Common myeloid progenitor, CD34-positive (primary cell): ENCODE measurements at regions of chr7 and their contacts with region 1.

Region 1: GRCh38 chr7:141654551-141654950 is 47.4 kb downstream of the DENND11 start:
- DNase-seq: peak; percentile 86 to 90 (median 88)
- H3K4me3 ChIP-seq: no peak overlapping the region
- H3K27ac ChIP-seq: peak overlapping the region in 1 of 2 experiments; percentile 20
- H3K4me1 ChIP-seq: peaks cover 7 to 18% (median 10%) of the 10 kb centered on the region in 4 experiments
- H3K27me3 ChIP-seq: no peaks in the 10 kb centered on the region

Region 2: GRCh38 chr7:141674702-141675101 is 20.2 kb after region 1 on chr7:
- CTCF ChIA-PET with region 1: interaction called, 233 read pairs
- POLR2A ChIA-PET with region 1: interaction called, 4 read pairs
- DNase-seq: peak in 1 of 3 donors; percentile 23
- H3K4me3 ChIP-seq: no peak overlapping the region
- H3K27ac ChIP-seq: no peak overlapping the region
- H3K4me1 ChIP-seq: peaks cover 14 to 27% (median 20%) of the 10 kb centered on the region in 4 experiments
- H3K27me3 ChIP-seq: no peaks in the 10 kb centered on the region

Region 3: GRCh38 chr7:141701489-141702046 is 47.0 kb after region 1 on chr7:
- CTCF ChIA-PET with region 1: interaction called, 31 read pairs
- POLR2A ChIA-PET with region 1: interaction called, 3 read pairs
- DNase-seq: peak; percentile 65 to 91 (median 89)
- H3K4me3 ChIP-seq: peak overlapping the region; percentile 69 to 91 (median 77)
- H3K27ac ChIP-seq: peak overlapping the region in 1 of 2 experiments; percentile 75
- H3K4me1 ChIP-seq: peaks cover 0 to 53% (median 27%) of the 10 kb centered on the region in 4 experiments
- H3K27me3 ChIP-seq: peaks cover 0 to 3% (median 0%) of the 10 kb centered on the region in 5 experiments

Region 4: GRCh38 chr7:141710301-141710700 is 55.8 kb after region 1 on chr7:
- CTCF ChIA-PET with region 1: interaction called, 48 read pairs
- POLR2A ChIA-PET with region 1: no interaction called
- DNase-seq: peak in 2 of 3 donors; percentile 34 to 36
- H3K4me3 ChIP-seq: no peak overlapping the region
- H3K27ac ChIP-seq: no peak overlapping the region
- H3K4me1 ChIP-seq: no peaks in the 10 kb centered on the region
- H3K27me3 ChIP-seq: no peaks in the 10 kb centered on the region

Region 5: GRCh38 chr7:141715794-141716689 is 61.5 kb after region 1 on chr7:
- CTCF ChIA-PET with region 1: interaction called, 48 read pairs
- POLR2A ChIA-PET with region 1: no interaction called
- DNase-seq: no peak
- H3K4me3 ChIP-seq: no peak overlapping the region
- H3K27ac ChIP-seq: no peak overlapping the region
- H3K4me1 ChIP-seq: no peaks in the 10 kb centered on the region
- H3K27me3 ChIP-seq: no peaks in the 10 kb centered on the region

Region 6: GRCh38 chr7:141731476-141732149 is 77.1 kb after region 1 on chr7:
- CTCF ChIA-PET with region 1: interaction called, 47 read pairs
- POLR2A ChIA-PET with region 1: no interaction called
- DNase-seq: no peak
- H3K4me3 ChIP-seq: no peak overlapping the region
- H3K27ac ChIP-seq: no peak overlapping the region
- H3K4me1 ChIP-seq: no peaks in the 10 kb centered on the region
- H3K27me3 ChIP-seq: no peaks in the 10 kb centered on the region

Region 7: DNA sequence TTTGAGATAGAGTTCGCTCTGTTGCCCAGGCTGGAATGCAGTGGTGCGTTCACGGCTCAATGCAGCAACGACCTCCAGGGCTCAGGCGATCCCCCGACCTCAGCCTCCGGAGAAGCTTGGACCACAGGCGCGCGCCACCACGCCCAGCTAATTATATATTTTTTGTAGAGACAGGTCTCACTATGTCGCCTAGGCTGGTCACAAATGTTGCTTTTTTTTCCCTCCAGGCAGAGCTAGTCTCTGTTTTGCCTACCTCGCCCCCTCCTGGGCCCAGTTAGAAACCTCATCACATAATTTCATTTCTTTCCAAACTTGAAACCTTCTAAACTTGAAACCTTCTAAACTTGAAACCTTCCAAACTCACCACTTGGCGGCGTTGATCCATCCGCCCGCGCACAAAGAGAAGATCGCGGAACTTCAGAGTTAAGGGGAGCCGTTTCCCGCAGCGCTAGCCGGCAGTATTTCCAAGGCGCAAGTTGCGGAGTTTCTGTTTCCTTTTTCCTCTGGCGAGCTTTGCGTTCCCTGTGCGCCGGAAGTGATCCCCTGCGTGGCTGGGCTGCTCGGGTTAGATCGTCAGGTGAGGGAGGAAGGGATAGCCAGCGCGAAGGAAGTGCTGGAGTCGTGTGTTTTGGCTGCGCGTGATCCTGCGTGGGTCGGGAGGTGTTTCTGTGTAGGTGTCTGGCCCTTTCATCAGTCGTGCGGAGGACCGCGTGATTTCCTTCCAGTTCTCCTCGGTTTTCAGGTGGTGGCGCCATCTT is 83.5 kb after region 1 on chr7 and contains the start of gene SSBP1:
- CTCF ChIA-PET with region 1: interaction called, 47 read pairs
- POLR2A ChIA-PET with region 1: interaction called, 10 read pairs
- DNase-seq: peak; percentile 99
- H3K4me3 ChIP-seq: peak within 1 kb of the TSS; percentile 77 to 100 (median 98)
- H3K27ac ChIP-seq: peak within 1 kb of the TSS; percentile 87 to 93
- H3K4me1 ChIP-seq: peaks cover 9 to 26% (median 20%) of the 10 kb centered on the region in 4 experiments
- H3K27me3 ChIP-seq: no peaks in the 10 kb centered on the region